Gastrocnemius medialis (tissue), 4 donors: ENCODE measurements at regions of chr2 and their contacts with region 1.

Region 1: DNA sequence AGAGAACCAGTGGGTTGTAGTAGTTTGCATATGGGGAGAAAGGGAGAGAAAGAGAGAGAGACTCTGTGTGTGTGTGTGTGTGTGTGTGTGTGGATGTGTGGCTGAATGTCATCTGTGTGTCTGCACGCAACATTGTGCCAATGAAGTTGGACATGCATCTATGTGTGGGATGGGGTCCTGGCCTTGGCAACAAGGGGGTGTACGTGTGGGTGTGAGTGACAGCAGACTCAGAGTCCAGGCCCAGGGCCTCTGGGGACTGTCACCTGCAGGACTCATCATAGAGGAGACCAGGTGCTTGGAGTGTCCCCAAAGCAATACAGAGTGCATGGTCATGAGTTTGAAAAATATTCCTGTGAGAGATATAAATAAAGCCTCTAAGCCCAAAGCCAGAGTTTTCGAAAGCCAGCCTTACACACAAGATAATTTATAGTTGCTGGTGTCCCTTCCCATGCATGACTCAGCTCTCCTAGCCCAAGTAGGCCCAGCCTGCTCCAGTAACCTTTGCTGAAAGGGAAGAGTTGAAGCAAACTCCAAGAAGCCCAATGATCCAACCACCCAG is 59.9 kb downstream of the TNP1 start:
- DNase-seq: peak; percentile 91 to 93
- ATAC-seq: peak; percentile 69 to 75
- H3K4me3 ChIP-seq: no peak overlapping the region
- H3K27ac ChIP-seq: peak overlapping the region; percentile 87 to 98 (median 96)
- H3K4me1 ChIP-seq: peaks cover 55 to 57% of the 10 kb centered on the region in 2 donors
- H3K27me3 ChIP-seq: no peaks in the 10 kb centered on the region
- CTCF ChIP-seq: peak in 1 of 5 experiments; percentile 26
- POLR2A ChIP-seq: peak; percentile 21 to 33

Region 2: DNA sequence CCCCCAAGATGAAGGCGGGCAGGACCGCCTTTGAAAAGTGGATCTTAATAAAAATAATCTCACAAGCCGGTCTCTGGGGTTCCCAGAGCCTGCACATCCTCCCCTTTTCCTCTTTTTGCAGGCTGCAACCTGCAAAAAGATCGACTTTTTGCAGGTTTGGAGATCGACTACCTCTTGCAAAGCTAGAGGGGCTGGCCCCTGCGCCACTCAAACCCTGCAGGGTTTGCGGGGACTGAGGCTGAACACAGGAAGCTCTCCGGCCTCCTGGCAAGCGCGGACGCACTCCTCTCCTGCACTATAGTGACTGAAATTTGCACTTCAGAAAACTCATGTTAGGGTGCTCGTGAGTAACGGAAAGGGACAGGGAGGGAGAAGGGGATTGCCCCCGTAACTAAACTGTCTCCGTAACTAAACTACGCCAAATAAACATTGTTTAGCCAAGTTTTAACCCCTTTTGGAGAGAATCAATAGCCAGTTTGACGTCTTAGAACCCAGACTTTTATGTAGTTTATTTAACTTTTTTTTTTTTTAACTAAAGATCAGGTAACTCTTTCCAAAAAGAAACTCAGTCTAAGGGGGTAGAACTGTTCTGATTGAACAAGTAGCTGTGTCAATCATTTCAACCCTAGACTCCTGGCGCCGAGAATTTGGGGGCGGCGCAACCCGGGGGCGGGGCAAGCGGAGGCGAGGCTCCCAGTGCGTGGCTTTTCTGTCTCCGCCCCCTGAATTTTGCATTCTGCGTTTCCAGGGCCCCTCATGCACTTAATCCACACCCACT is 107.1 kb before region 1 on chr2:
- in situ Hi-C with region 1: no loop called
- intact Hi-C with region 1: loop called (anchors 2 kb)
- DNase-seq: peak; percentile 77 to 90
- ATAC-seq: peak; percentile 54 to 58
- H3K4me3 ChIP-seq: peak overlapping the region; percentile 74 to 95 (median 78)
- H3K27ac ChIP-seq: peak overlapping the region; percentile 93 to 95 (median 93)
- H3K4me1 ChIP-seq: peaks cover 74% of the 10 kb centered on the region in 2 donors
- H3K27me3 ChIP-seq: no peaks in the 10 kb centered on the region
- CTCF ChIP-seq: no peak
- POLR2A ChIP-seq: peak; percentile 29 to 54

Region 3: DNA sequence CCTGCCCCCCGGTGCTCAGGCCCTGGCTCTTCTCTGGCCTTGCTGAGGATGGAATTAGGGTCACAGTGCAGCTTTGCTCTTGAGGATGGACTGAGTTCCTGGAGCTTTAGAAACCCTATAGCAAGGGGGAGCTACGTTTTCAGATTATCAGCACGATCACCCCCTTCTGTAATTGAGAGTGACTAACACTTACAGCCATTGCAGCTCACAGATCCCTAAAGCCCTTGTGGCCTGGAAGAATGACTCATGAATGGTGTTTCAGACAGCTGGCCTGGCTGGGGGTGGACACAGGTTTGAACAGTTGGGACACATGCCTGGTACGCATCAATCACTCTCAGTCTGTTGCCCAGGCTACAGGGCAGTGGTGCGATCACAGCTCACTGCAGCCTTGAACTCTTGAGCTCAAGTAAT is 24.9 kb before region 1 on chr2:
- in situ Hi-C with region 1: no loop called
- intact Hi-C with region 1: loop called (anchors 1 kb)
- DNase-seq: peak; percentile 93 to 97
- ATAC-seq: peak; percentile 88 to 93
- H3K4me3 ChIP-seq: no peak overlapping the region
- H3K27ac ChIP-seq: peak overlapping the region; percentile 94 to 98 (median 96)
- H3K4me1 ChIP-seq: peaks cover 35 to 37% of the 10 kb centered on the region in 2 donors
- H3K27me3 ChIP-seq: no peaks in the 10 kb centered on the region
- CTCF ChIP-seq: peak in 2 of 5 experiments; percentile 21 to 23
- POLR2A ChIP-seq: peak in 1 of 2 donors; percentile 10

Region 4: GRCh38 chr2:216880509-216881184 is 80.7 kb after region 1 on chr2:
- in situ Hi-C with region 1: loop called in 2 of 4 experiments (anchors 5 to 10 kb)
- intact Hi-C with region 1: loop called (anchors 2 kb)
- DNase-seq: peak; percentile 79 to 89
- ATAC-seq: peak; percentile 64 to 72
- H3K4me3 ChIP-seq: no peak overlapping the region
- H3K27ac ChIP-seq: peak overlapping the region; percentile 88 to 95 (median 90)
- H3K4me1 ChIP-seq: peaks cover 77 to 84% of the 10 kb centered on the region in 2 donors
- H3K27me3 ChIP-seq: no peaks in the 10 kb centered on the region
- CTCF ChIP-seq: no peak
- POLR2A ChIP-seq: no peak

Region 5: GRCh38 chr2:216888907-216889622 is 89.1 kb after region 1 on chr2:
- in situ Hi-C with region 1: loop called in 2 of 4 experiments (anchors 5 to 10 kb)
- intact Hi-C with region 1: loop called (anchors 1 kb)
- DNase-seq: peak; percentile 86 to 94
- ATAC-seq: peak; percentile 67
- H3K4me3 ChIP-seq: peak overlapping the region in 1 of 4 donors; percentile 11
- H3K27ac ChIP-seq: peak overlapping the region; percentile 87 to 95 (median 90)
- H3K4me1 ChIP-seq: peaks cover 50 to 55% of the 10 kb centered on the region in 2 donors
- H3K27me3 ChIP-seq: no peaks in the 10 kb centered on the region
- CTCF ChIP-seq: no peak
- POLR2A ChIP-seq: peak; percentile 20 to 34